ENCODE measurements at regions of chr6 and their contacts with region 1.

Region 1: DNA sequence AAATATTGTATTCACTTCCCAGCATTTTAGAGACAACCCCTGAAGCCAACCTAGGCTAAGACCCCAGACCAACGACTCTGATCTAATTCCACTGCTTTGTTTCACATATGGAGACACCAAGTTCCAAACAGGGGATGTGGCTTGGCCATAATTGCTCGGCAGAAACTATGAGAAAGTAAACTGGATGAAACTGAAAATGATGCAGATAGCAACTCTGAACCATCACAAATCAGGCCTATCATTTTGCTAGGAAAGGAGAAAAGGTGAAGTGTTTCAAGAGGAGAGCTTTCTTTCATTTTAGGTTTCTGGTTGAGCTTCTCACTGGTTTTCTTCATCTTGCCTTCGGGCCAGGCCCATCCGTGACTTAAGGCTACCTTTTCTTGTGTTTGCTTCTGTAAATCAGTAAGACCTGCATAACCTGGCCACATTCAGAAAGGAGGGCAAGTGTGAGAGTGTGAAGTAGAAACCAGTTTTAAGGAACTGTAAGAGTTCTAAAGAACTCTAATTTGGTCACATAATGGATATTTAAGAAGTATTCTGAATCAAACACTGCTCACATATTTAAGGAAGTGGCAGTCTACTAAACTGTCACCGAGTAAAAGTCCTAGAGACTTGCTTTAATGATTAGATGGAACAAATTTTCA is 105.8 kb downstream of the BACH2 start:
- DNase-seq: peak; percentile 39
- ATAC-seq: peak; percentile 23
- H3K4me3 Mint-ChIP-seq: peak overlapping the region; percentile 15
- H3K27ac Mint-ChIP-seq: peak overlapping the region; percentile 75
- H3K4me1 Mint-ChIP-seq: peaks cover 87% of the 10 kb centered on the region
- H3K27me3 Mint-ChIP-seq: no peaks in the 10 kb centered on the region

Region 2: DNA sequence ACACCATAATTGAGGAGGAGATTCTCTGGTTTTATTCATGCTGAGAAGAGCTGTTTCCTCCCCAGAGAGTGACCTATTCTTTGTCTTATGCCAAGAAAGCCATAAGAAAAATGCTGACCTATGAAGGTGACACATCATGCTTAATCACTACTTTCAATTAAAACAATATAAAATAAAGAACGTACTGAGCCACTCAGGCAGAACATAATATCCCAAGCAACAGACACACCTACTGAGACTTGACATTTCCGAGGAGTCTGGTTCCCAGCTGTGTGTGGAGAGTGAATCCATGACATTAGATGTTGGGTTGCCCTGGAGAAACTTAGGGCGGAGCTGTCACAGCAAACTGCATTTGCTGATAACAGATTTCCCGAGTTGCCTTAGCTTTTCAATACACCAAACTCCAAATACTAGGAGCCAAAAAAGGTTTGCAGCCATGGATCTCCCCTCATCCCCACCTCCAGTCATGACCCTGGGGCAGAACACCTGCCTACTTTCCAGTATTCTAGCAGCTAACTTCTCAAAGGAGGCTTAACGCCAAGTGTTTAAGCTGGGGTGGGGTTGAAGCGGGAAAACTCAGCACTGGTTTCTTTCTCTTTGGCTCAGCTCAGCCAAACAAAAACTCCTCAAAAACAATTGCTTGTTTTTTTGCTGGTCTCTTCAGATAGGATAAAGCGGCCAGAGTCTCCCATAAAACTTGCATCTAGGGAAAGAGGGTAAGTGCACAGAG is 13.6 kb after region 1 on chr6:
- CTCF ChIA-PET with region 1: interaction called, 20 read pairs
- POLR2A ChIA-PET with region 1: interaction called, 5 read pairs
- DNase-seq: no peak
- ATAC-seq: no peak
- H3K4me3 Mint-ChIP-seq: no peak overlapping the region
- H3K27ac Mint-ChIP-seq: no peak overlapping the region
- H3K4me1 Mint-ChIP-seq: peaks cover 68% of the 10 kb centered on the region
- H3K27me3 Mint-ChIP-seq: no peaks in the 10 kb centered on the region